Dendritic cell treated with granulocyte-macrophage colony-stimulating factor and Interleukin-4, amounts not matched to agents 40 ng/mL and 50 ng/mL, for 4 days (primary cell): ENCODE measurements at regions of chr12 and their contacts with region 1.

Region 1: DNA sequence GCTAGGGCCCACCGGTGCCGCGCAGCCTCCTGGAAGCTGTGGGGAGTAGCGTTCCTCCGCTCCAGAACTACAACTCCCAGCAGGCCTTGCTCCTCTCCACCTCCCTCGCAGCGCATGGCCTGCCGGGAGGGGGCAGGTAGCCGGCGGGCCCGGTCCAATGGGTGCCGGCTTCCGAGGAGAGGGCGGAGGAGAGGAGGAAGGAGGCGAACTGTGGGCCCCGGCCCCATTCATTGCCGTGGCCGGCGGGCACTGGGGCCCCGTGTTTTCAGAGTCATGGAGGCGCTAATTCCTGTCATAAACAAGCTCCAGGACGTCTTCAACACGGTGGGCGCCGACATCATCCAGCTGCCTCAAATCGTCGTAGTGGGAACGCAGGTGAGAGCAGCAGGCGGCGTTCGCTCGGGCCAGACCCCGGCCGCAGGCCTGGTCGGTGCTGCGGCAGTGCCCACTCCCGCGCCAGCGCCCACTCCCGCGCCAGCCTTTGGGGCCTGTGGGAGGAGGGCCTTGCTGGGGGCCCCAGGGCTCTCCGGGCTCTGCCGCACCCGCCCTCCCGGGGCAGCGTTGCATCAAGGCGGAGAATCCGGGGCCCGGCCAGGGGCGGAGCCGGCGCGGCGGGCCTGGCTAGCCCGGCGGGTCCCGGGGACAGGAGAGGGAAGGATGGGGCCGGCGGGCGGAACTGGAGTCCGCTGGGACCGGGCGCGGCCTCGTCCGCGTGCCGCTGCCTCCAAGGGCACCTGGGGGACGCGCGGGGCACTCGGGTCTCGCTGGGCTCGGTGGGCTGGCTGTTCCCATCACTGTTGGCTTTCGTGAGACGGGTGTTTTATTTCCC is at the start of gene DNM1L:
- H3K4me3 Mint-ChIP-seq: peak within 1 kb of the TSS; percentile 87
- H3K27ac Mint-ChIP-seq: peak within 1 kb of the TSS; percentile 93
- H3K4me1 Mint-ChIP-seq: peaks cover 35% of the 10 kb centered on the region
- H3K27me3 Mint-ChIP-seq: no peaks in the 10 kb centered on the region

Region 2: DNA sequence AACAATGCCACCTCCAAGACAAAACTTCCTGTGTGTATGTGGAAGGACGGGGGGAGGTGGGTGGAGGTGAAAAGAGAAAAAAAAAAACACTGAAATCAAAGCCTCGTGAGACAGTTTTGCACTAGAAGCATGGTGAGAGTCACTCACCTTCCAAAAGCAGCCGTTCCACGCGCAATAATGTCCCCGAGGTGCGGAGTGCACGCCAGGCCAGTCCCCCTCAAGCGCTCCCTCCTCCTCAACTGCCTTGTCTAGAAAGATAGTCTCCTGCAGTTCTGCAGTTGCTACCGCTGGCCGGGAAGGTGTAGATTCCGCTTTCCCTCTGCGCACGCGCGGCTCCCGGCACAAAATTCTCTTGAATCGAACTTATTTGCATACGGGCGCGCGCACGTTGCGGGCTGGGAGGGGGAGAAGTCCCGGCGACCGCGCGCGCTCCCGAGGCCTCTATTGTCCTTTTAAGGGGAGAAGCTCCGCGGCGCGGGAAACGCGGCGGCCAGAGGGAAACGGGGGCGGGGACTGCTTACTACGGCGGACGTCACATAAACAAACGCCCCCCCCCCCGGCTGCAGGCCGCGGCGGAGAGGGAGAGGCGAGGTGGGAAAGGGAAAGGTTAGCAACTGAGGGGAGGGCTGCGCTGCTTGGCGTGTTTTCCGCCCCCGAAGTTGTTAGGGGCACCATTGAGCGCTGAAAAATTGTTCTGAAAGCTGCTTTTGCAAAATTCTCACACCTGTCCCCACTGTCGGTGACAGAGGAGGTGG is 1353.3 kb before region 1 on chr12 and contains the start of gene SINHCAF:
- intact Hi-C with region 1: loop called (anchors 5 kb)
- H3K4me3 Mint-ChIP-seq: peak within 1 kb of the TSS; percentile 97
- H3K27ac Mint-ChIP-seq: peak within 1 kb of the TSS; percentile 91
- H3K4me1 Mint-ChIP-seq: peaks cover 19% of the 10 kb centered on the region
- H3K27me3 Mint-ChIP-seq: peaks cover 2% of the 10 kb centered on the region

Region 3: GRCh38 chr12:31659087-31659933 is 1020.0 kb before region 1 on chr12 and contains the start of gene ETFBKMT:
- intact Hi-C with region 1: loop called (anchors 10 kb)
- H3K4me3 Mint-ChIP-seq: peak within 1 kb of the TSS; percentile 82
- H3K27ac Mint-ChIP-seq: peak within 1 kb of the TSS; percentile 98
- H3K4me1 Mint-ChIP-seq: peaks cover 25% of the 10 kb centered on the region
- H3K27me3 Mint-ChIP-seq: no peaks in the 10 kb centered on the region

Region 4: GRCh38 chr12:32558903-32559302 is 120.4 kb before region 1 on chr12:
- intact Hi-C with region 1: no loop called
- H3K4me3 Mint-ChIP-seq: no peak overlapping the region
- H3K27ac Mint-ChIP-seq: no peak overlapping the region
- H3K4me1 Mint-ChIP-seq: peaks cover 56% of the 10 kb centered on the region
- H3K27me3 Mint-ChIP-seq: no peaks in the 10 kb centered on the region